ENCODE measurements at regions of chr9 and their contacts with region 1.

Region 1: GRCh38 chr9:105881654-105882349 is 187.5 kb downstream of the TMEM38B start:
- DNase-seq: peak; percentile 10
- H3K4me3 ChIP-seq: no peak overlapping the region
- H3K27ac ChIP-seq: no peak overlapping the region
- H3K27me3 ChIP-seq: no peaks in the 10 kb centered on the region
- CTCF ChIP-seq: peak; percentile 86

Region 2: GRCh38 chr9:105438141-105438806 is 443.5 kb before region 1 on chr9:
- CTCF ChIA-PET with region 1: no interaction called
- POLR2A ChIA-PET with region 1: no interaction called
- DNase-seq: peak; percentile 86
- H3K4me3 ChIP-seq: no peak overlapping the region
- H3K27ac ChIP-seq: no peak overlapping the region
- H3K27me3 ChIP-seq: no peaks in the 10 kb centered on the region
- CTCF ChIP-seq: no peak

Region 3: DNA sequence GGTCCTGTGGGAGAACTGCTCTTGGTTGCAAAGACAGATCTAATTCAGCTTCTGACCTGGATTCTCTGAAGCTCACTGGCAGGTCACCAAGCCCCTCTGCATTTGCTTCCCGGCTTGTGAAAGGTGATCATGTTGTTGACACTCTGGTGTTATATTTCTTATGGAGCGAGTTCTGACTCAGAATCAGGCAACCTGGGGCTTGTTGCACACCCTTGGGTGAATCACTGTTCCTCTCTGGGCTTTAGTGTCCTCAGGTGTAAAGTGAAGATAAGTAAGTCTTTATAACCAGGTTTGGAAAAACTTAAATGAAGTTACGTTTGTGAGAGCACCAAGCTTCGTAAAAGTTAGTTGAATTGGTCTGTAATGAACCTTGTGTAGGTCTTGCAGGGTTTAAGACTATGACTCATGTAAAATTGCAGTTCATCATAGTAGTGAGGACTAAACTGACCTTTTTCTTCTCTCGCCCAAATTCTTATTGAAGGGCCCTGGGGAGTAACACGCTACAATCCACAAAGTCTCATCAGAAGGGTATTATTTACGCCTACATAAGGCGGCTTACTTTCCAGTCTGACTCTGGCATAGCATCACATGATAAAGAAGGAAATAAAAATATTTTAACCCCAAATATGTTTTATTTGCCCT is 31.2 kb after region 1 on chr9:
- CTCF ChIA-PET with region 1: interaction called, 10 read pairs
- POLR2A ChIA-PET with region 1: no interaction called
- DNase-seq: no peak
- H3K4me3 ChIP-seq: no peak overlapping the region
- H3K27ac ChIP-seq: no peak overlapping the region
- H3K27me3 ChIP-seq: no peaks in the 10 kb centered on the region
- CTCF ChIP-seq: no peak

Region 4: GRCh38 chr9:106075960-106076327 is 194.1 kb after region 1 on chr9:
- CTCF ChIA-PET with region 1: no interaction called
- POLR2A ChIA-PET with region 1: no interaction called
- DNase-seq: no peak
- H3K4me3 ChIP-seq: no peak overlapping the region
- H3K27ac ChIP-seq: no peak overlapping the region
- H3K27me3 ChIP-seq: no peaks in the 10 kb centered on the region
- CTCF ChIP-seq: no peak

Measured in AG04450 (cell line).